Cardiac septum (tissue), 1 donor: ENCODE measurements at regions of chr15 and their contacts with region 1.

Region 1: GRCh38 chr15:65832549-65833364 is 36.5 kb upstream of the RAB11A start:
- DNase-seq: peak; percentile 85

Region 2: GRCh38 chr15:65792130-65792987 is 40.4 kb before region 1 on chr15 and contains the start of gene DENND4A:
- intact Hi-C with region 1: loop called (anchors 5 kb)
- DNase-seq: peak; percentile 99
- total RNA-seq, gene DENND4A: 19.1 TPM

Region 3: DNA sequence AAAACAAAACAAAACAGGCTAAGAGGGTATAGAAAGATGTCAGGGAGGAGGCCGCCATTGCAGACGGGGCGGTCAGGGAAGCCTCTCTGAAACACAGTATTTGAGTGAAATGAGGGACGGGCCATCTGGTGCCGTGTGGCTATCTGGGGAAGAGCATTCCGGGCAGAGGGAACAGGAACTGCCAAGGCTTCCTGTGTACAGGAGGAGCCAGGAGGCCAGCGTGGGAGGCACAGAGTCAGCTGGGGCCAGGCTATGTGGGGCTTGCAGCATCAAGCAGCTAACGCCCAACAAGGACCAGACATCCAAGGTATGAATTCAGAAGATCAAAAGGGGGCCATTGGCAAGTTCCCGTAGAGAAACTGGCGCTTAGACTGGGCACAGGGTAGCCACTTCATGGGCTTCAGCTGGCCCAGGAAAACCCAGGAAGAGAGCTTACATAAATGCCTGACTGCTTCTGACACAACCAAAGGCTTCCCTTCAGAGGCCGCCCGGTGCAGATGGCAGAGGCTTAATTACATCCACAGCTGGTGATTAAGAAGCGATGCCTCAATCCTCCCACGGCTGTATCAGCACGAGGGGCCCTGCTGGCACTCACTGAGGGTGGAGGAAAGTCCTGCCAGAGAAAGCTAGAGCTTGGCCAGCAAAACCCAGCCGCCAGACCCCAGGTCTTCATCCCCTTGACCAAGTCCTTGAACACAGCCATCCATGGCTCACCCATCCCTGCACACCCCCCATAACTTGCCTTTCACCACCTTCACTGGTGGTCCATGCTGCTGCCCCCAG is 275.9 kb after region 1 on chr15:
- intact Hi-C with region 1: no loop called
- DNase-seq: no peak